ENCODE measurements at regions of chr22 and their contacts with region 1.

Region 1: DNA sequence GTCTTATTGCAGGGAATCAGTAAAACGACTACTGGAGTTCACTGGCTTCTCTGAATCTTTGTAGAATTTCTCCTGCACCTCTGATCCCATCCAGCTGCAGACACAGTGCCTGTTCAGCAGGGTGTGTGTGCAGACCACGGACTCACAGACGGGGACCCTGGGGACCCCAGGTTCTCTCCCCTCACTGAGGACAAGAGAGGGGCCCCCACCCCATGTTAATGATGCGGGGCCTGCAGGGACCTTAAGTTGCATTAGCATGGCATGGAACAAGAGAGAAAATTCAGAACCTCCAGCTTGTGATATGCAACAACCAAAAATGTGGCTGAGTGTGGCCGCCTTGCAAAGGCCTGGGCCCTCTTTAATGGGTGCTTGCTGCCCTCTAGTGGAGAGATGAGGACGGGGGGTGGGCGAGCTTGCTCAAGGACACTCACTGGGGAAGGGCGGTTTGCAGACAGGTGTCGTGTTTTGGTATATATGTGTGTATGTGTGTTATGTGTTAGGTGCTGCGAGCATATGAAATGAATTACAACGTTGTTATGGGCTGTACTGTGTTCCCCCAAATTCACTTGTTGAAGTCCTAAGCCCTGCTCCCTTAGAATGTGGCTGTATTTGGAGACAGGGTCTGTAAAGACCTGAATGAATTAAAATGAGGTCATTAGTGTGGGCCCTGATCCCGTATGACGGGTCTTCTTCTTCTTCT is 84.4 kb upstream of the SEPTIN5 start:
- DNase-seq: peak; percentile 86
- ATAC-seq: peak; percentile 95
- H3K4me3 ChIP-seq: no peak overlapping the region
- H3K4me3 Mint-ChIP-seq: no peak overlapping the region
- H3K27ac ChIP-seq: no peak overlapping the region
- H3K27ac Mint-ChIP-seq: no peak overlapping the region
- H3K4me1 ChIP-seq: no peaks in the 10 kb centered on the region
- H3K4me1 Mint-ChIP-seq: no peaks in the 10 kb centered on the region
- H3K27me3 ChIP-seq: peaks cover 0 to 24% (median 4%) of the 10 kb centered on the region in 4 experiments
- H3K27me3 Mint-ChIP-seq: peaks cover 40% of the 10 kb centered on the region
- CTCF ChIP-seq: peak; percentile 96

Region 2: DNA sequence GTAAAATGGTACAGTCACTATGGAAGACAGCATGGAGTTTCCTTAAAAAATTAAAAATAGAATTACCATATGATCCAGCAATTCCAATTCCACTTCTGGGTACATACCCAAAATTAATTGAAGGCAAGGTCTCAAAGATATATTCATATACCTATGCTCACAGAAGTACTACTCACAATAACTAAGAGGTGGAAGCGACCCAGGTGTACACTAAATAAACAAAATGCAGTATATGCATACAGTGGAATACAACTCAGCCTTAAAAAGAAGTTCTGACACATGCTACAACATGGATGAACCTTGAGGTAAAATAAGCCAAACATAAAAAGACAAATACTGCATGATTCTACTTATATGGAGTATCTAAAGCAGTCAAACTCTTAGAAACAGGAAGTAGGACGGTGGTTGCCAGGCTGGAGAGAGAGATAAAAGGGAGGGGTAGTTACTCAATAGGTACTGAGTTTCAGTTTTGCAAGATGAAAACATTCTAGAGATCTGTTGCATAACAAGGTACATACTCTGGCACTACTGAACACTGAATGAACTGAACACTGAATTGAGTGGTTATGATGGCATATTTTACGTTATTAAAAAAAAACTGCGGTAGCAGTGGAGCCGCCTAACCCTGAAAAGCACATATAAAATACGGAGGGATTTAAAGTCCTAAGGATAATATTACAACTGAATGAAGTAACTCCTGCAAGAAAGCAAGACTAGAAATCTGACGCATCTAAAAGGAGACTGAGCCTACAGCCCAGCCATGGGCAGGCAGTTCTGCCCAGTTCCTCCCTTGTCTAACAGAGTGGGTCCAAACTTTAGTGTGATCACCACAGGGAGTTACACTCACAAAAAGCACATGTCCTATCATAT is 520.4 kb before region 1 on chr22:
- CTCF ChIA-PET with region 1: interaction called, 3 read pairs
- POLR2A ChIA-PET with region 1: no interaction called
- intact Hi-C with region 1: loop called (anchors 1 kb)
- DNase-seq: peak; percentile 78
- ATAC-seq: peak; percentile 95
- H3K4me3 ChIP-seq: peak overlapping the region in 3 of 5 experiments; percentile 11 to 52 (median 35)
- H3K4me3 Mint-ChIP-seq: peak overlapping the region; percentile 70
- H3K27ac ChIP-seq: peak overlapping the region; percentile 55 to 65
- H3K27ac Mint-ChIP-seq: peak overlapping the region; percentile 85
- H3K4me1 ChIP-seq: peaks cover 25 to 47% of the 10 kb centered on the region in 2 donors
- H3K4me1 Mint-ChIP-seq: peaks cover 59% of the 10 kb centered on the region
- H3K27me3 ChIP-seq: no peaks in the 10 kb centered on the region
- H3K27me3 Mint-ChIP-seq: no peaks in the 10 kb centered on the region
- CTCF ChIP-seq: no peak

Region 3: GRCh38 chr22:19495562-19496323 is 134.1 kb before region 1 on chr22:
- CTCF ChIA-PET with region 1: interaction called, 14 read pairs
- POLR2A ChIA-PET with region 1: no interaction called
- intact Hi-C with region 1: loop called (anchors 1 kb)
- DNase-seq: no peak
- ATAC-seq: no peak
- H3K4me3 ChIP-seq: no peak overlapping the region
- H3K4me3 Mint-ChIP-seq: no peak overlapping the region
- H3K27ac ChIP-seq: no peak overlapping the region
- H3K27ac Mint-ChIP-seq: no peak overlapping the region
- H3K4me1 ChIP-seq: no peaks in the 10 kb centered on the region
- H3K4me1 Mint-ChIP-seq: no peaks in the 10 kb centered on the region
- H3K27me3 ChIP-seq: no peaks in the 10 kb centered on the region
- H3K27me3 Mint-ChIP-seq: no peaks in the 10 kb centered on the region
- CTCF ChIP-seq: peak; percentile 10

Region 4: DNA sequence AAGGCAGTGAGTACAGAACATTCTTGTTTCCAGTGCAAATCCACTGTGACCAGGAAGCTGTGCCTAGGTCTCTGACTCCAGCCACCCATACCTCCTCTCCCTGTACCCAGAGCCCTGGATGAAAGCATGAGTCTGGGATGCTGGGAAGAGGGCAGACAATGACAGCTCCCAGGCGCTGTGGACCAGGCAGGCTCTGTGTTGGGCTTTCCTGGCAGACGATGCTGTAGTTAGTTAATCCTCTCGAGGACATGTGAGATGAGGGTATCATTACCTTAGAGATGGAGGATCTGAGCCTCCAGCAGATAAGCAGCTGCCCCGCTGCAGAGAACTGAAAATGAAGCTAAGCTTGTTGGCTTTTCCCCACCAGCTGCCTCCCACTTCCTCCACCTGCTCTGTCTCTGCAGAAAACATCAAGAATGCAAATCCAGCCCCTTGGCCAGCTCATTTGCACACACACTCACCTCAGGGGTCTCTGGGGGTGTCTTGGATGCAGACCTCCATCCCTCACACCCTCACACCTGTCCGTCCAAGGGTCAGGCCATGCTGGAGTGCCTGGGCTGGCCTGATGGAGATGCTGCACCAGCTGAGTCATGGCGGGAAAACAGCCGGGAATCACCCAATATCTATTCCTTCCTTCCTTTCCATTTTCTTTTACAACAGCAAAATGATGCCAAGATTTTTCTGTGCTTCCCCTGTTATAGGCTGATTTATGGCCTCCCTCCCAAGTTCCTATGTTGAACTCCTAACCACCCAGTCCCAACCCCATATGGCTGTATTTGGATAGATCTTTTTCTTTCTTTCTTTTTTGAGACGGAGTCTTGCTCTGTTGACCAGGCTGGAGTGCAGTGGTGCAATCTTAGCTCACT is 10.5 kb before region 1 on chr22:
- CTCF ChIA-PET with region 1: interaction called, 15 read pairs
- POLR2A ChIA-PET with region 1: no interaction called
- intact Hi-C with region 1: no loop called
- DNase-seq: peak; percentile 59
- ATAC-seq: peak; percentile 31
- H3K4me3 ChIP-seq: peak overlapping the region in 1 of 5 experiments; percentile 23
- H3K4me3 Mint-ChIP-seq: peak overlapping the region; percentile 57
- H3K27ac ChIP-seq: no peak overlapping the region
- H3K27ac Mint-ChIP-seq: peak overlapping the region; percentile 28
- H3K4me1 ChIP-seq: peaks cover 35 to 59% of the 10 kb centered on the region in 2 donors
- H3K4me1 Mint-ChIP-seq: peaks cover 52% of the 10 kb centered on the region
- H3K27me3 ChIP-seq: peaks cover 0 to 22% (median 5%) of the 10 kb centered on the region in 4 experiments
- H3K27me3 Mint-ChIP-seq: peaks cover 30% of the 10 kb centered on the region
- CTCF ChIP-seq: no peak

Measured in B cell (primary cell).